Activated CD4-positive, alpha-beta memory T cell treated with anti-CD3 and anti-CD28 coated beads for 36 hours (primary cell): ENCODE measurements at regions of chr10 and their contacts with region 1.

Region 1: DNA sequence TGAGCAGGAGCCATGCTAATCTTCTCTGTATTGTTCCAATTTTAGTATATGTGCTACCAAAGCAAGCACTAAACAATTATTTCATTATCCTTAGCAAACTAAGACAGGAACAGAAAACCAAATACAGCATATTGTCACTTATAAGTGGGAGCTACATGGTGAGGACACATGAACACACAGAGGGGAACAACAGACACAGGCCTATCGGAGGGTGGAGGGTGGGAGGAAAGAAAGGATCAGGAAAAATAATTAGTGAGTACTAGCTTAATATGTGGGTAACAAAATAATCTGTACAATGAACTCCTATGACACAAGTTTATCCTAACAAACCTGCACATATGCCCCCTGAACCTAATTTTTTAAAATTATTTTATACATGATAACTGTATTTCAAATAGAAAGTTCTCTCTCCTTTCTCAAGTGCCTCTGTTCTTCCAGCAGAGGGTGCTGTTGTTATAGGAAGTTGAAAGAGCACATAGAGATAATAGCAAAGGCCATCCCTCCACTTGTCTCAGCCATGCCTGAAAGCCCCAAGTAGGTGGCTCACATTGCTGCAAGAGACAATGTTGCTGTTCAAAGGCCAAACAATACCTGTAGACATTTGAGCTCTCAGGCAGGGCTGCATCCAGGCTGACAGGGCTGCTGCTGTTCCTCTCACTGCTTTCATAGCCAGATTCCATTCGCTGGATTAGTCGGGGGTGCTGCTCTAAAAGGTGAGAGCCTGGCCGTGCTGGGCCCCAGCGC is 33.4 kb upstream of the PPP3CB start:
- DNase-seq: peak; percentile 44
- H3K4me3 Mint-ChIP-seq: no peak overlapping the region
- H3K27ac Mint-ChIP-seq: no peak overlapping the region
- H3K4me1 Mint-ChIP-seq: no peaks in the 10 kb centered on the region
- H3K27me3 Mint-ChIP-seq: no peaks in the 10 kb centered on the region

Region 2: DNA sequence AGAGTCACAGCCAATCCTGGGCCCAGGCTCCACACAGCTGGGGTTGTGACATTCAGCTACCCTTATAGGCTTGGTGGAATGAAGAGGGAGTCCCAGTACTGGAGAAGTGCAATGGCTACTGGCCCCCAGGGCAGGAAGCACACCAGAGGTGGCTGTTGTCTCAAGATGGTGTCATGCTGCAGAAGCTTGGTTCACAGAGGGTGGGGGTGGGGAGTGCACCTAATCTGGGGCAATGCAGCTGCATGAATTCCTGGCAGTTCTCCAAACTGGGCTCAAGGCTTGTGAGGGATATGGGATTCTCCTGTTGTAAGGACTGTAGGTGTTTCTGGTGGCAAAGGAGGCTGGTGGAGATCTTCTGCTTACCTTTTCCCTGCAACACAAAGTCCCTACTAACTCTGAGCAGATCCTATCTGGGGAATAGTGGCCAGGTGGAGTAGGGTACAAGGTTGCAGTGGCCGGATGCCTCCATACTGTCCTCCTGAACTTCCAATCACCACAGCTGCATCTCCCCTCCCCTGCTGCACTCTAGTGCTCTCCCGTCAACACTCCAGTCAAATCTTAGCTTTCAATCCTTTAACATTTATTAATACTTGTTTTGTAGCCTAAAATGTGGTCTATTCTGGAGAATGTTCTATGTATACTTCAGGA is 547.3 kb before region 1 on chr10:
- CTCF ChIA-PET with region 1: no interaction called
- POLR2A ChIA-PET with region 1: no interaction called
- intact Hi-C with region 1: no loop called
- DNase-seq: no peak
- H3K4me3 Mint-ChIP-seq: no peak overlapping the region
- H3K27ac Mint-ChIP-seq: no peak overlapping the region
- H3K4me1 Mint-ChIP-seq: no peaks in the 10 kb centered on the region
- H3K27me3 Mint-ChIP-seq: peaks cover 3% of the 10 kb centered on the region

Region 3: DNA sequence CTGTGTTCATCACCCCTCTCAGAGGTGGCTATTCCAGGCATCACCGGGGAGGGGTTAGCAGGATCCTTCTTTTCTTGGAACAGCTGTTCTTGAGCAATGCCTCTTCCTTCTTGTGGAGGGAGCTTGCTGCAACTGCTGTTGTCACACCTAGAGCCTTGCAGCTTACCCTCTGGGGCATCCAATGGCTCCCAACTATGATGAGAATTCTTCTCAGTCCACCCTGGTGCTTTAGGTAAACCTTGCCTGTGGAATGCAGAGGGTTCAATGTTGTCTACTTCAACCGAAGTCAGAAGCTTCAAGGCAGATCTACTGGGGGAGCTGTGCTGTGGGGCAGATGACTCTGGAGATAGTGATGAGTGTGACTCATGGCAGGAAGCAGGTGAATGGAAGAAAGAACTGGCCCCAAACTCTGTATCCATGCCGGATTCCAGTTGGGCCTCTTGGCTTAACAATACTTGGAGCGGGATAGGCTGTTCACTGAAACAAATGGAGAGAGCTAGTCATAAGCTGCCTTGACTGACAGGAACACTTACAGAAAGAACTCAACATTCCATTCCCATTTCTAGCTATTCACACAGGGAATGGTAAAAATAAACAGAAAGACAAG is 11.9 kb before region 1 on chr10:
- CTCF ChIA-PET with region 1: interaction called, 10 read pairs
- POLR2A ChIA-PET with region 1: interaction called, 4 read pairs
- intact Hi-C with region 1: no loop called
- DNase-seq: no peak
- H3K4me3 Mint-ChIP-seq: no peak overlapping the region
- H3K27ac Mint-ChIP-seq: no peak overlapping the region
- H3K4me1 Mint-ChIP-seq: no peaks in the 10 kb centered on the region
- H3K27me3 Mint-ChIP-seq: no peaks in the 10 kb centered on the region

Region 4: GRCh38 chr10:73625884-73626752 is 96.9 kb after region 1 on chr10:
- CTCF ChIA-PET with region 1: interaction called, 4 read pairs
- POLR2A ChIA-PET with region 1: no interaction called
- intact Hi-C with region 1: loop called (anchors 5 kb)
- DNase-seq: peak; percentile 96
- H3K4me3 Mint-ChIP-seq: peak overlapping the region; percentile 94
- H3K27ac Mint-ChIP-seq: peak overlapping the region; percentile 93
- H3K4me1 Mint-ChIP-seq: peaks cover 17% of the 10 kb centered on the region
- H3K27me3 Mint-ChIP-seq: no peaks in the 10 kb centered on the region

Region 5: DNA sequence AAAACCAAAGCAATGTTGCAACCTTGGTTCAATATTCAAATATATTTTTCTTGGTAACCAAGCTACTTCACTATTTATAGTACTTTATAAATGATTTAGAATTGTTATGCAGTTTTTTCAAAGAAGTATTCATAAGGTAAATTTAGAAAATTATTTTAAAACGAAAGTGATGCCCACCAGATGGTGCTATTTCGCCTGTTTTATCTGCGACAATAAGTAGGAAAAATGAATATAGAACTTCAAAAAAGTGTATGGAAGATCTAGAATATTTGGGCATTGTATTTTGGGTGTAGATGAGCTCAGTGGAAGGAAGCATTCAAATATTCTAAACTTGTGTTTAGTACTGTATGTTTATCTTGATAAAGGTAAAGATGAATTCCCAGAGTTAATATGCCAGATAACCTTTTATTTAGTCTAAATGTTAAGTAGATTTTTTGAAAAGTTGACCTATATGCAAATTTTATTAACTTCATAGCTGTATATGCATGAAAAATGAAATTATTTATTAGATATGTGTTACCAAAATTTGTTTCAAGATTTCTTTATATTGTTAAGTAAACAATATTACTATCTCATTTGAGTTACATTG is 714.9 kb after region 1 on chr10:
- CTCF ChIA-PET with region 1: no interaction called
- POLR2A ChIA-PET with region 1: no interaction called
- intact Hi-C with region 1: no loop called
- DNase-seq: no peak
- H3K4me3 Mint-ChIP-seq: no peak overlapping the region
- H3K27ac Mint-ChIP-seq: no peak overlapping the region
- H3K4me1 Mint-ChIP-seq: no peaks in the 10 kb centered on the region
- H3K27me3 Mint-ChIP-seq: no peaks in the 10 kb centered on the region